HCT116 (cell line): ENCODE measurements at regions of chr1 and their contacts with region 1.

Region 1: GRCh38 chr1:168082008-168082876 is 54.5 kb downstream of the GPR161 start:
- DNase-seq: peak; percentile 43
- ATAC-seq: peak; percentile 79
- H3K4me3 ChIP-seq: no peak overlapping the region
- H3K27ac ChIP-seq: no peak overlapping the region
- H3K4me1 ChIP-seq: peaks cover 25 to 41% of the 10 kb centered on the region in 2 experiments
- H3K27me3 ChIP-seq: no peaks in the 10 kb centered on the region
- CTCF ChIP-seq: peak; percentile 67 to 95 (median 85)
- POLR2A ChIP-seq: no peak
- RAD21 ChIP-seq: peak; percentile 93

Region 2: DNA sequence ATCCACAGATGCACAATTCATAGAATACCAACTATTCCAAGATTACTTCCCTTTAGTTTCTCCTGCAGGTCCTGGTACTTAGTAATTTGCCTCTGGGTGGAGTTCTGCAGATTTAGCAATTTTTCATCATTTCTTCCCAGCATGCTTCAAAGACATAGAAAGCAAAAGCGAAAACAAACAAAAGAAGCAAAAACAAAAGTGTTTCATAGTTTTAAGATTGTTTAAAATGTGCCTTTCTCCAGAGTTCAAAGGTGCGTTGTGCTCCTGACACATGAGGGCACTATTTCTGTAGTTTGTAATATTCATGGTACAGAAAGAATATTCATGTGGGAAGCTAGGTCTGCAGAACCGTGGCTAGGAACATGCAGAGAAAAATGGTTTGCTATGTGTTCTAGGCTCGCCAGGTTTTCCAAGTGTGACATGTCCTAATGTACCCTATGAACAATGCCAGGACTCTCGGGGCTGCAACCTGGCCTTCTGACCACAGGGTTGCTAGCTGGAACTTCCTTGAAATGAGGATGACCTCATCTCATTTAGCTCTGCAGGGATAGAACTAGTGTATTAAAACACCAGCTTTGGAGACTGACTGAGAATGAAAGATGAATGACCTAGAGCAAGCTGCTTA is 482.2 kb before region 1 on chr1:
- CTCF ChIA-PET with region 1: interaction called, 11 read pairs
- POLR2A ChIA-PET with region 1: no interaction called
- RAD21 ChIA-PET with region 1: interaction called, 4 read pairs
- intact Hi-C with region 1: loop called (anchors 5 kb)
- DNase-seq: peak; percentile 6
- ATAC-seq: no peak
- H3K4me3 ChIP-seq: no peak overlapping the region
- H3K27ac ChIP-seq: no peak overlapping the region
- H3K4me1 ChIP-seq: no peaks in the 10 kb centered on the region
- H3K27me3 ChIP-seq: no peaks in the 10 kb centered on the region
- CTCF ChIP-seq: peak in 2 of 3 experiments; percentile 42 to 53; a peak in 4 of 6 replicates
- POLR2A ChIP-seq: no peak
- RAD21 ChIP-seq: peak; percentile 73

Region 3: DNA sequence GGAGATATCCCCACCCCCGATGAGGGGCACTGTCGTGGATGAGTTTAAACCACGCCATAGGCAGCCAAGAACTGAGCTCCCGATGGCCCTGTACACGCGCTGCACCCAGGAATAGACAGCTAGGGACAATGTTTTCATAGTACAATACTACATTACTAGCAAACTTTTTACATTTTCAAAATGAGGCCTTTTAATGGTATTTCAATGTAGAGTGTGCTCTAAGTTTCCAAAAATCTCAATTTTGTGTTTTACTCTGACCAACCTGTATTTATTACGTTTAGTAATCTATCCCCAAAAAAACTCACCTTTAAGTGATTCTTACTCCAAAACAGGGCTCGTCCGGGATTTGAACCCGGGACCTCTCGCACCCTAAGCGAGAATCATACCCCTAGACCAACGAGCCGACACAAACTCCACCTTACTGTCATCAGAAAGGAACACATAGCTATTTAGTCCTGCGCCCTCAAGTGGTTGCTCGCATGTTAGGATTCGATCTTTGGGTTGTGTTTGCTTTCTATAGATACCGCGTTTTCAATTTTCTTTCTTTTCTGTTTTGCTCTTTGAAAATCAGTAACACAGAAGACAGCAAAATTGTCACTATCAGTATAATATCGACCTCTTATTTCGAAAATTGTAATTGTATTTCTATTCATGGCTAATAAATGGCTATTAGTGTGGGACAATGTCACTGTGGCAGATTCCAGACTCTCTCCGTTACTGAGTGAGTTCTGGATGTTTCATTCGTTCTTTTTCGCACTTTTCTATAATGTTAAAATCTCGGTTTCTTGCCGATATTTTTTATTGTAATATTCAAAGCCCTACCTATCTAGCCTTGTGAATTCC is 366.9 kb before region 1 on chr1:
- CTCF ChIA-PET with region 1: interaction called, 11 read pairs
- POLR2A ChIA-PET with region 1: no interaction called
- RAD21 ChIA-PET with region 1: no interaction called
- intact Hi-C with region 1: loop called (anchors 1 kb)
- DNase-seq: peak; percentile 86
- ATAC-seq: peak; percentile 57
- H3K4me3 ChIP-seq: peak overlapping the region; percentile 52 to 58
- H3K27ac ChIP-seq: peak overlapping the region; percentile 67
- H3K4me1 ChIP-seq: peaks cover 10 to 32% of the 10 kb centered on the region in 2 experiments
- H3K27me3 ChIP-seq: no peaks in the 10 kb centered on the region
- CTCF ChIP-seq: peak in 2 of 3 experiments; percentile 86; a peak in 4 of 6 replicates
- POLR2A ChIP-seq: no peak
- RAD21 ChIP-seq: no peak

Region 4: DNA sequence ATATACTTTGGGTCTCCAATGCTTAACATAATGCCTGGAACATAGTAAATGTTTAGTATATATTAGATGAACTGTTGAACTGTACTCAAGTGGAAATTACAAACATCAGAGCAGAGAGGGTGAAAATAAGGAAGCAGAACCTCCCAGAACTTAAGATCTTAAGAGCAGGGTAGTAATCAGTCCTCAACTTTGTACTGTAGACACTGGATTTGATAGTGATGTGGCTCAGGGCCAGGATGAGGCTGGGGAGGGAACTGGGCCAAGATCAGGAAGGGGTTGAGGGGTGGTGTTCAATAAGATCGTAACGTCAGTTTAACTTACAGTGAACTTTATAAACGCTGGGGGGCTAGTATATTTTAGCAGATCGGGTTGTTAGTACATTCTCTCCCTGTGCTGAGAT is 345.1 kb before region 1 on chr1:
- CTCF ChIA-PET with region 1: no interaction called
- POLR2A ChIA-PET with region 1: no interaction called
- RAD21 ChIA-PET with region 1: no interaction called
- intact Hi-C with region 1: no loop called
- DNase-seq: no peak
- ATAC-seq: no peak
- H3K4me3 ChIP-seq: no peak overlapping the region
- H3K27ac ChIP-seq: no peak overlapping the region
- H3K4me1 ChIP-seq: peaks cover 4 to 16% of the 10 kb centered on the region in 2 experiments; a peak in 3 of 4 replicates
- H3K27me3 ChIP-seq: no peaks in the 10 kb centered on the region
- CTCF ChIP-seq: no peak
- POLR2A ChIP-seq: no peak
- RAD21 ChIP-seq: no peak

Region 5: DNA sequence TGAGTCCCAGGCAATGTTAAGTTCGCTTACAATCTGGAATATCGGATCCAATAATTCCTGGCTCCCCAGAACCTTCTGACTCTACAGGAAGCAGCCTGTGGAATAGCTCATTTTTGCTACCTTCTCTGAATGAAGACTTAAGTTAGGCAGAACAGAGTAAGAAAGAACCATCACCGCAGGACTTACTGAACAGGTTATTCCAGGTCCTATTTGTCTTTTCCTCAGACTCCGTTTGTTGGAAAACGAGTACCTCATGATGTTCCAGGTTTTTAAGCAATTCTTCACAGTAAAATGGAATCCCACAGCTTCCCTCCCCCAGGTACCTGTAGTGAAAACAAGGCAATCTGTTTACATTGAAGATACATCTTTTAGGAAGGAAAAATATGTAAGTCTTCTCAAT is 228.1 kb before region 1 on chr1:
- CTCF ChIA-PET with region 1: interaction called, 3 read pairs
- POLR2A ChIA-PET with region 1: no interaction called
- RAD21 ChIA-PET with region 1: no interaction called
- intact Hi-C with region 1: loop called (anchors 10 kb)
- DNase-seq: no peak
- ATAC-seq: no peak
- H3K4me3 ChIP-seq: no peak overlapping the region
- H3K27ac ChIP-seq: no peak overlapping the region
- H3K4me1 ChIP-seq: peaks cover 0 to 3% of the 10 kb centered on the region in 2 experiments; a peak in 1 of 4 replicates
- H3K27me3 ChIP-seq: no peaks in the 10 kb centered on the region
- CTCF ChIP-seq: no peak
- POLR2A ChIP-seq: no peak
- RAD21 ChIP-seq: no peak

Region 6: GRCh38 chr1:168069384-168069783 is 12.9 kb before region 1 on chr1:
- CTCF ChIA-PET with region 1: interaction called, 10 read pairs
- POLR2A ChIA-PET with region 1: no interaction called
- RAD21 ChIA-PET with region 1: interaction called in 1 of 2 experiments, 7 read pairs
- intact Hi-C with region 1: no loop called
- DNase-seq: no peak
- ATAC-seq: no peak
- H3K4me3 ChIP-seq: no peak overlapping the region
- H3K27ac ChIP-seq: no peak overlapping the region
- H3K4me1 ChIP-seq: no peaks in the 10 kb centered on the region
- H3K27me3 ChIP-seq: no peaks in the 10 kb centered on the region
- CTCF ChIP-seq: peak in 1 of 3 experiments; percentile 22; a peak in 2 of 6 replicates
- POLR2A ChIP-seq: no peak
- RAD21 ChIP-seq: no peak

Region 7: GRCh38 chr1:168092566-168093355 is 10.5 kb after region 1 on chr1:
- CTCF ChIA-PET with region 1: interaction called, 27 read pairs
- POLR2A ChIA-PET with region 1: no interaction called
- RAD21 ChIA-PET with region 1: no interaction called
- intact Hi-C with region 1: no loop called
- DNase-seq: peak; percentile 19
- ATAC-seq: peak; percentile 85
- H3K4me3 ChIP-seq: no peak overlapping the region
- H3K27ac ChIP-seq: no peak overlapping the region
- H3K4me1 ChIP-seq: peaks cover 0 to 10% of the 10 kb centered on the region in 2 experiments; a peak in 1 of 4 replicates
- H3K27me3 ChIP-seq: no peaks in the 10 kb centered on the region
- CTCF ChIP-seq: peak; percentile 35 to 54 (median 41); a peak in 3 of 6 replicates
- POLR2A ChIP-seq: no peak
- RAD21 ChIP-seq: peak; percentile 77

Region 8: DNA sequence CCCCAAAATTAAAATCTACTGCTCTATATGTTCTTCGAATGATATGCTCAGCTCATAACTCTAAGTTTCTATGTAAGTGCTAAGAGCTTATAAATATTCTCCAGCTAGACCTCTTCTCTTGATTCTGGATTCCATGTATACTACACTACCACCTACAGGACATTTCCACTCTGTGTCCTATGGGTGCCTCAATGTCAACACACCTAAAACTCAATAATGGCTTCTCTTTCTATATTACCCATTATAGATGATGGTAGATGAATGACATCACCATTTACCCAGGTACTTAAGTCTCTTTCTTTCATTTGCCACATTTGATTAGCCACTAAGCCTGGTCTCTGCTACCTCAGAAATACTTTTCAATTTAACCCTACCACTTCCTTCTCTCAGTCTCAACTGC is 239.7 kb after region 1 on chr1:
- CTCF ChIA-PET with region 1: interaction called, 10 read pairs
- POLR2A ChIA-PET with region 1: no interaction called
- RAD21 ChIA-PET with region 1: interaction called in 1 of 2 experiments, 3 read pairs
- intact Hi-C with region 1: loop called (anchors 2 kb)
- DNase-seq: peak; percentile 27
- ATAC-seq: peak; percentile 75
- H3K4me3 ChIP-seq: no peak overlapping the region
- H3K27ac ChIP-seq: no peak overlapping the region
- H3K4me1 ChIP-seq: peaks cover 13 to 28% of the 10 kb centered on the region in 2 experiments
- H3K27me3 ChIP-seq: no peaks in the 10 kb centered on the region
- CTCF ChIP-seq: peak; percentile 40 to 65 (median 58); a peak in 5 of 6 replicates
- POLR2A ChIP-seq: no peak
- RAD21 ChIP-seq: peak; percentile 73

Region 9: GRCh38 chr1:168386949-168387586 is 304.8 kb after region 1 on chr1:
- CTCF ChIA-PET with region 1: no interaction called
- POLR2A ChIA-PET with region 1: no interaction called
- RAD21 ChIA-PET with region 1: no interaction called
- intact Hi-C with region 1: no loop called
- DNase-seq: peak; percentile 64
- ATAC-seq: peak; percentile 91
- H3K4me3 ChIP-seq: peak overlapping the region in 1 of 2 experiments; percentile 14; a peak in 2 of 4 replicates
- H3K27ac ChIP-seq: no peak overlapping the region
- H3K4me1 ChIP-seq: peaks cover 36 to 38% of the 10 kb centered on the region in 2 experiments
- H3K27me3 ChIP-seq: no peaks in the 10 kb centered on the region
- CTCF ChIP-seq: no peak
- POLR2A ChIP-seq: no peak
- RAD21 ChIP-seq: no peak